ENCODE measurements at regions of chr17 and their contacts with region 1.

Region 1: DNA sequence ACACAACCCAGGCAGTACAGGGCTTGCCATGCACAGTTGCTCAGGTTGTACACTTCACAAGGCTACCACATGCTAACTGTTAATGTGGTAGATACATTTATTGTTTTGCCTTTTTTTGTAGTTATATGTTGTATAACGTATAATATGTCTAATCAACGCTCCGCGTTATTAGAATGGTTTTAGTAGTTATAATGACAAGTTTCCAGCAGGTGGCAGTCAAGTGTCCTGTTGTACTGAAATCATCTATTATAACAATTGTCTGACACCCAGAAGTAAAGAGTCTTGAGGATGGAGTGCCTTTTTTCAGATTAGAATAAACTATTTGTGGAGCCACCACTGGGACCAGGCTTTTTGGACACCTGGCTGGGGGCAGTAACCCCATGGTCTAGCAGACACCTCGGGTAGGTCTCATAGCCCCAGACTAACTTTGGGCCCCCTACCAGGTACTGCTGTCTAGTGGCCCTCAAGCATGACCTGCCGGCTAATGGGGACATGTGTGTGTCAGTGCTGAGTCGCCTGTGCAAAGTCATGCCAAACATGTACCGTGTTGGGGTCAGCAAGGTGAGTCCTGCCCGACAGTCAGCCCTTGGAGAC is 32.8 kb downstream of the MYO15A start:
- DNase-seq: peak; percentile 82
- ATAC-seq: peak; percentile 54; the same call in 1 of the 2 replicates
- H3K4me3 ChIP-seq: no peak overlapping the region
- H3K27ac ChIP-seq: no peak overlapping the region
- H3K4me1 ChIP-seq: no peaks in the 10 kb centered on the region
- H3K27me3 ChIP-seq: no peaks in the 10 kb centered on the region
- CTCF ChIP-seq: peak; percentile 79

Region 2: GRCh38 chr17:18108401-18109312 is 32.6 kb before region 1 on chr17 and contains the start of gene MYO15A:
- CTCF ChIA-PET with region 1: no interaction called
- POLR2A ChIA-PET with region 1: no interaction called
- intact Hi-C with region 1: no loop called
- DNase-seq: no peak
- ATAC-seq: no peak
- H3K4me3 ChIP-seq: no peak within 1 kb of the TSS
- H3K27ac ChIP-seq: no peak within 1 kb of the TSS
- H3K4me1 ChIP-seq: no peaks in the 10 kb centered on the region
- H3K27me3 ChIP-seq: no peaks in the 10 kb centered on the region
- CTCF ChIP-seq: no peak
- total RNA-seq, gene MYO15A: 0.26 TPM in 1 of 2 replicates, not detected in the other

Region 3: DNA sequence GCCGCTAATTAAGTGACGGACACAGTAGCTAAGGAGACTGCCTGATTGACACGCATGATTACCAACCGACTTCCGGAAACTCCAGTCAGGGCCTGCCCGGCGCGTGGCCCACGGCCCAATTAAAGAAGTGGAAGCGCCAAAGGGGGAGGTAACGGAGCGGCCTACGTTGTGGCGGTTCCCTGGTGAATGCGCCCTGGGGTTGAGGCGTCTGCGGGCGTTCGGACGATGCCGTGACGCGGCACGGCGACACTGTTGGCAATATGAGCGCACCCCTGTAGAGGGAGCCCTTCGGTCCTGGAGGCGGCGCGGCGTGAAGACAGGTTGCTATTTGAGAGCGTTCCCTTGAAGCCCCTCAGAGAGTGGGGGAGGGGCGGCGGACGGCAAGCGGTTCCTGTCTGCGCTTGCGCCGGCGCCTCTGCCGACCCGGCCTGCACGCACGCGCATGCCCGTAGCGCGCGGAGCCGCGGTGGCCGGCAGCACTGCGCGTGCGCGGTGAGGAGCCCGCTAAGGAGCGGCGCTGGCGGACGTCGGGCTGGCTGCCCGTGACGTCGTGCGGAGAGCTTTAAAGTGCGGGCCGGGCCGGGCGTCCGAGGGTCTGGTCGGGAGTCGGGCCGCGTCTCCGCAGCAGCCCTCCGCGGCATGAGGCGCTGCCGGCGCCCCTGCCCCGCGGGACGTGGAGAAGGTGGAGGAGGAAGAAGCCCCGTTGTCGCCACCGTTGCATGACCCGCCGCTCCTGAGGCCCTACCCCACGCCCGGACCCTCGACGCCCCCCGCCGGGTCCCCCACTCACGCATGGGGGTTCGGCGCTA is 42.2 kb after region 1 on chr17 and contains the start of gene ALKBH5:
- CTCF ChIA-PET with region 1: no interaction called
- POLR2A ChIA-PET with region 1: interaction called, 3 read pairs
- intact Hi-C with region 1: loop called (anchors 1 kb)
- DNase-seq: peak; percentile 99
- ATAC-seq: peak; percentile 81
- H3K4me3 ChIP-seq: peak within 1 kb of the TSS; percentile 95
- H3K27ac ChIP-seq: peak within 1 kb of the TSS; percentile 92
- H3K4me1 ChIP-seq: peaks cover 43% of the 10 kb centered on the region
- H3K27me3 ChIP-seq: no peaks in the 10 kb centered on the region
- CTCF ChIP-seq: peak; percentile 42; the same call in 1 of the 2 replicates
- total RNA-seq, gene ALKBH5: 207 and 227 TPM in 2 replicates

Region 4: DNA sequence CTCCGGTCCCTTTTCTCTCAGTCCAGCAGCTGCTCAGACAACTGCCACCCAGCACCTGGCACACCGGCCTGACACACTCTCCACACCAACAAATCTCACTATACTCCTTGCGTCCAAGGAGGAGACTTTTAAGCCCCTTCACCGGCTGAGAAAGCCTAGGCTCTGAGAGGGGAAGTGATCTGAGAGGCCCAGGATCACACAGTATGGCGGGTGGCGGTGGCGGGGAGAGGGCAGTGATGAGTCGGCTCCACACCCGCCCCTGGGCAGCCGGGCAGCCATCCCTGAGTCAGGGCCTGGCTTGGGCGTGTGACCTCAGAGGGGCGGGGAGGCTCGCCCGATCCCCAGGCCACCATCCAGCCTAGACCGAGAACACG is 116.7 kb after region 1 on chr17:
- CTCF ChIA-PET with region 1: interaction called, 11 read pairs
- POLR2A ChIA-PET with region 1: no interaction called
- intact Hi-C with region 1: no loop called
- DNase-seq: peak; percentile 79
- ATAC-seq: peak; percentile 66
- H3K4me3 ChIP-seq: peak overlapping the region; percentile 88
- H3K27ac ChIP-seq: peak overlapping the region; percentile 86
- H3K4me1 ChIP-seq: peaks cover 35% of the 10 kb centered on the region
- H3K27me3 ChIP-seq: no peaks in the 10 kb centered on the region
- CTCF ChIP-seq: no peak

Measured in PC-3 (cell line).